Activated CD4-positive, alpha-beta T cell treated with anti-CD3 and anti-CD28 coated beads, Interleukin-2, amount 10 ng/mL, durations not matched to agents 7 days and 5 days (primary cell): ENCODE measurements at regions of chr2 and their contacts with region 1.

Region 1: DNA sequence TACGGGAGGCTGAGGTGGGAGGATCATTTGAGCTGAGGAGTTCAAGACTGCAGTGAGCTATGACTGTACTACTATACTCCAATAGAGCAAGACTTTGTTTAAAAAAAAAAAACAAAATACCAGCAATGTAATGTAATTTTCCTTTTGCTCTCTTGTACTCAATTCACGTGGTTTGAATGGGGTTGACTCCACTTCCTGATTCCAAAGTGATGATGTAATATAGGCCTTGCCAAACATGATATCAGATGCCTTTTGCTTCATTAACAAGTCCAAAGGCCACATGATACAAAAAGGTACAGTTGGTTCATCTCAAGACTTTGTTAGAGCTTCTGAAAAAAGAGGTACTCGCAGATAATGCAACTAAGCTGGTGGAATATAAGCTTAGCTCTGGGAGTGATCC is 321.8 kb downstream of the ZEB2 start:
- DNase-seq: no peak
- H3K4me3 Mint-ChIP-seq: no peak overlapping the region
- H3K27ac Mint-ChIP-seq: no peak overlapping the region
- H3K4me1 Mint-ChIP-seq: peaks cover 14% of the 10 kb centered on the region
- H3K27me3 Mint-ChIP-seq: no peaks in the 10 kb centered on the region

Region 2: DNA sequence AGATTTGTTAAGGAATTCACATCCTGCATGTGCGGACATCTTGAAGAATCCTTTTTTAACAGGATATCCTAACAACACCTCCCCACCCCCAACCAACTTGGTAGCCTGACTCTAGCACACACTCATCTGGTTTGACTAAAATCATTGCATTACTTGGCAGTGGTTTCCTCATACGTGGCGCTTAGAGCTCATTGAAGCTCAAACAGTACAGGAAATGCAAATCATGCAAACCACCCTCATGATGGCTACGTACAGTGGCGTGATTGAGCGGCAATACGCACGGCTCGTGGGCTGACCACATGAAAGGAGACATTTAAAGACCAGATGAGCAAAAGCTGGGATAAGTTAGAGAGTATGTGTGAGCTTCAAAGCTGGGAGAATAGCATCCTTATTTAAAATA is 14.4 kb before region 1 on chr2:
- CTCF ChIA-PET with region 1: interaction called, 13 read pairs
- POLR2A ChIA-PET with region 1: no interaction called
- DNase-seq: peak; percentile 79
- H3K4me3 Mint-ChIP-seq: peak overlapping the region; percentile 45
- H3K27ac Mint-ChIP-seq: peak overlapping the region; percentile 81
- H3K4me1 Mint-ChIP-seq: peaks cover 24% of the 10 kb centered on the region
- H3K27me3 Mint-ChIP-seq: no peaks in the 10 kb centered on the region